ENCODE measurements at regions of chr20 and their contacts with region 1.

Region 1: GRCh38 chr20:10553326-10553984 is 118.3 kb downstream of the SLX4IP start:
- DNase-seq: peak; percentile 70
- ATAC-seq: peak; percentile 45
- H3K4me3 Mint-ChIP-seq: no peak overlapping the region
- H3K27ac Mint-ChIP-seq: no peak overlapping the region
- H3K4me1 Mint-ChIP-seq: peaks cover 38% of the 10 kb centered on the region
- H3K27me3 Mint-ChIP-seq: no peaks in the 10 kb centered on the region

Region 2: GRCh38 chr20:10823585-10823984 is 270.1 kb after region 1 on chr20:
- CTCF ChIA-PET with region 1: no interaction called
- POLR2A ChIA-PET with region 1: no interaction called
- intact Hi-C with region 1: loop called in 1 of 2 experiments (anchors 5 kb)
- DNase-seq: no peak
- ATAC-seq: no peak
- H3K4me3 Mint-ChIP-seq: no peak overlapping the region
- H3K27ac Mint-ChIP-seq: no peak overlapping the region
- H3K4me1 Mint-ChIP-seq: no peaks in the 10 kb centered on the region
- H3K27me3 Mint-ChIP-seq: no peaks in the 10 kb centered on the region

Region 3: DNA sequence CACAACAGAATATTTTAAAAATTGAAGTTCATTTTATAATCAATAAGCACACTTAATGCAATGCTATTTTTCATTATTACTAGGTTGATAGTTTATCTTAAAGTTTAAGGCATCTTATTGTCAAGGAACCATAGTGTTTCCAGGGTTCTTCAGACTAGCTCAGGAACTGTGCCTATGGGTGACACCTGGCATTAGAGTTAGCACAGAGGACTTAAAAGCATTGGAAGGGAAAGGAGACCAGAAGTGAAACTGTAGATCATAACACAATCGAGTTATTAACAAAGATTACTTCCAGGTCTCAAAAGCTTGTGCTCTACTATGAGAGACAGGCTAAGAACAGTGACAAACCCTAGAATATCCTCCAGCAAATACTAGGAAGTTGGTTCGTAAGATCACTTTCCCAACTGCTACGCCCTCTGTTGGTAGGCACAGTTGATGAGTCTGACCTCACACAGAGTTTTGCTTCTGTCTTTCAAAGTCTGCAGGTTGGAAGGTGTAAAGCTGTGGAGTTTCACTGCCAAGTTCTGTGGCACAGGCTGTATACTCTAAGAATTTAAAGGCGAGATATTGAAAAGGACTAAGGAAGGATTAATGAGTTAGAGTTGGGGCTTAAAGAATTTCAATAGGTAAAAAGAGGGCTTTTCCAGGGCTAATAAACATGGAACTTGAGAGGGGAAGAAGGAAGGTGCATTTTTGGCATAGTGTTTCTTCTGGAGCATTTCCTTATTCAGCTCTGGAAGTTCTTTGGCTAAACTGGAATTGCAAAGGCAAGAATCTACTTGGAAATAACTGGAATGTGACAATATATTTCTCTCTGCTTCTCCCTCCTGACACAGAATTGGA is 651.7 kb after region 1 on chr20:
- CTCF ChIA-PET with region 1: no interaction called
- POLR2A ChIA-PET with region 1: no interaction called
- intact Hi-C with region 1: loop called (anchors 2 to 5 kb)
- DNase-seq: peak; percentile 41
- ATAC-seq: peak; percentile 60
- H3K4me3 Mint-ChIP-seq: no peak overlapping the region
- H3K27ac Mint-ChIP-seq: no peak overlapping the region
- H3K4me1 Mint-ChIP-seq: peaks cover 3% of the 10 kb centered on the region
- H3K27me3 Mint-ChIP-seq: peaks cover under 1% of the 10 kb centered on the region

Region 4: GRCh38 chr20:11271920-11272594 is 718.6 kb after region 1 on chr20:
- CTCF ChIA-PET with region 1: no interaction called
- POLR2A ChIA-PET with region 1: no interaction called
- intact Hi-C with region 1: loop called in 1 of 2 experiments (anchors 2 kb)
- DNase-seq: no peak
- ATAC-seq: no peak
- H3K4me3 Mint-ChIP-seq: no peak overlapping the region
- H3K27ac Mint-ChIP-seq: no peak overlapping the region
- H3K4me1 Mint-ChIP-seq: peaks cover 3% of the 10 kb centered on the region
- H3K27me3 Mint-ChIP-seq: no peaks in the 10 kb centered on the region

Region 5: GRCh38 chr20:11544029-11544678 is 990.7 kb after region 1 on chr20:
- CTCF ChIA-PET with region 1: no interaction called
- POLR2A ChIA-PET with region 1: no interaction called
- intact Hi-C with region 1: loop called (anchors 1 to 5 kb)
- DNase-seq: peak; percentile 25
- ATAC-seq: no peak
- H3K4me3 Mint-ChIP-seq: no peak overlapping the region
- H3K27ac Mint-ChIP-seq: no peak overlapping the region
- H3K4me1 Mint-ChIP-seq: no peaks in the 10 kb centered on the region
- H3K27me3 Mint-ChIP-seq: no peaks in the 10 kb centered on the region

Measured in activated CD4-positive, alpha-beta T cell treated with anti-CD3 and anti-CD28 coated beads for 36 hours (primary cell).